Uterus (tissue), 4 donors: ENCODE measurements at regions of chr19 and their contacts with region 1.

Region 1: GRCh38 chr19:10332955-10333757 is at the start of gene RAVER1:
- DNase-seq: peak; percentile 98
- H3K4me3 ChIP-seq: peak within 1 kb of the TSS; percentile 77 to 99
- H3K27ac ChIP-seq: peak within 1 kb of the TSS; percentile 94 to 96
- H3K4me1 ChIP-seq: peaks cover 0 to 5% of the 10 kb centered on the region in 2 donors
- H3K27me3 ChIP-seq: no peaks in the 10 kb centered on the region
- CTCF ChIP-seq: no peak
- POLR2A ChIP-seq: peak; percentile 65 to 85
- total RNA-seq, gene RAVER1: 7.4 to 42.4 (median 16.4) TPM

Region 2: GRCh38 chr19:9847087-9847671 is 486.0 kb before region 1 on chr19:
- intact Hi-C with region 1: no loop called
- DNase-seq: peak; percentile 69 to 73
- H3K4me3 ChIP-seq: no peak overlapping the region
- H3K27ac ChIP-seq: peak overlapping the region in 1 of 2 donors; percentile 3
- H3K4me1 ChIP-seq: no peaks in the 10 kb centered on the region
- H3K27me3 ChIP-seq: no peaks in the 10 kb centered on the region
- CTCF ChIP-seq: peak; percentile 32 to 43 (median 34)
- POLR2A ChIP-seq: no peak

Region 3: DNA sequence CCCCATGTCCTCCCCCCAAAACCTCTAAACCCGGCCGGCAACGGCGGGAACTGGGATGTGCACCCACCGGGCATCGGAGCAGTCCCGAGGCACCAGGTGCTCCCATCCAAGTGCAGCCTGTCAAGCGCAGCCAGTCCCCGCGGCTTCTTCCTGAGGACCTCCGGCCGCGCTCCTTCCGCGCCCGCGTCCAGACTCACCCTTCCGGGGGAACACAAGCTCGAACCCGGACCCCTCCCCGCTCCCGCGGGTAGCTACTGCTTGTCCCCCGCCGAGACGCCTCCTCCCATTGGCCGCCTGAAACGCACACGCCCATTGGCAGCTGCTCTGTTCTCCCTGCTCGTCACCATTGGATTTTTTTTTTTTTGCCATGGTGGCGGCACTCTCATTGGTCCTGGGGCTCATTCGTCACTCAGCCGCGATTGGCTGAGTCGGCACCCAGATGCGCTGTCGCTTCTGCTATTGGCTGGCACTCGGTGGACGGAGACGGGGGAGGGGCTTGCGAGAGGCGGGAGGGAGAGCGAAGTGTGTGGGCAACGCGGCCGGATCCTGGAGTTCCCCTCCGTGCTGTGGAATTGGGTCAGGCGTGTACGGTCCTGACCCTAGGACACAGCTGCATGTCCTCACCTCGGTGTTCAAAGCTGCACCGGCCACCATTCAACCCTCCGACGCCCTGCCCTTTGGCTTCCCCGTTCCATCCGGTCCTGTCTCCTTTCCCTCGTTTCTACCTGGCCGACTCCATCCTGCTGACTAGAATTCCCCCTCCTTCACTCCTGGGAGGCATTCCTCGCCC is 47.4 kb after region 1 on chr19 and contains the start of gene TYK2:
- intact Hi-C with region 1: loop called (anchors 10 kb)
- DNase-seq: peak; percentile 97 to 98
- H3K4me3 ChIP-seq: peak within 1 kb of the TSS; percentile 78 to 89
- H3K27ac ChIP-seq: peak within 1 kb of the TSS; percentile 81
- H3K4me1 ChIP-seq: no peaks in the 10 kb centered on the region
- H3K27me3 ChIP-seq: no peaks in the 10 kb centered on the region
- CTCF ChIP-seq: peak in 1 of 4 experiments; percentile 34
- POLR2A ChIP-seq: peak in 1 of 2 donors; percentile 60
- total RNA-seq, gene TYK2: 22.0 to 112 (median 67.8) TPM